Right cardiac atrium (tissue), 5 donors: ENCODE measurements at regions of chr20 and their contacts with region 1.

Region 1: DNA sequence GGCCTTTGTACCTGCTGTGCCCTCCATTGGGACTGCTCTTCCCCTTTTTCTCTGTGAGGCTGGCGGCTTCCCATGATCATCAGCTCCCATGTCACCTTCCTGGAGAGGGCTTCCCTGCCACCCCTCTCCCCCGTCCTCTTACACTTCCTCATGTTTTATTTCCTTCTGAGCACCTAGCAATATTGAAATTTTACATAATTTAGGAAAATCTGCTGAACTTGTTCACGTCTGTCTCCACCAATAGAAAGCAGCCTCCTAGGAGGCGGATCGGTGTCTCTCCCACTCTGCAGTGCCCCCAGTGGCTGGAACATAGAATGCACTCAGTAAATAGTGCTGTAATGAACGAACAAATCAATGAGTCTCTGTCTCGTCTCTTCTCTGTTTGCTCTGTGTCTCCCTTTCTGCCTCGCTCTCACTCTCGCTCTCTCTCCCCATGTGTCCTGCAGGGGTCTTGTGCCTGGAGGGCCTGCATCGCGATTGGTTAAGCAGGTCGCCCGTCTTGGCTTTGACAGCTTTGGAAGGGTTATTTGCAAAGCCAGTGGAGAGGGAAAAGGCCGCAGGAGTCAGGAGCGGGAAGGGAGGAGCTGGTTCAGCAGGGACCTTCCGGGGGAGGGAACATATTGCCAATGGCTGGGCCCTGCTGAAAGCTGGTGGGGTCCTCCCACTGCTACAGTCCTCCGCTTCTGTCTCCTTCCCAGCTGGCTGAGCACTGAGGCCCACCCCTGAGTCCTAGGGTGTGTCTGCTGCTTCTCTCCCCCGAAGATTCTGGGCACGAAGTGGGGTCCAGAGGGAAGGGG is 12.1 kb upstream of the OCSTAMP start:
- DNase-seq: peak; percentile 61 to 87 (median 82)
- ATAC-seq: peak; percentile 85 to 88
- H3K4me3 ChIP-seq: peak overlapping the region; percentile 42
- H3K27ac ChIP-seq: peak overlapping the region; percentile 63
- H3K4me1 ChIP-seq: peaks cover 3% of the 10 kb centered on the region
- H3K27me3 ChIP-seq: no peaks in the 10 kb centered on the region

Region 2: GRCh38 chr20:46674253-46675083 is 111.9 kb after region 1 on chr20:
- intact Hi-C with region 1: loop called in 1 of 4 experiments (anchors 10 kb)
- DNase-seq: peak in 1 of 3 donors; percentile 50
- ATAC-seq: peak; percentile 34 to 53
- H3K4me3 ChIP-seq: no peak overlapping the region
- H3K27ac ChIP-seq: no peak overlapping the region
- H3K4me1 ChIP-seq: no peaks in the 10 kb centered on the region
- H3K27me3 ChIP-seq: no peaks in the 10 kb centered on the region